Heart right ventricle (tissue), 16 donors: ENCODE measurements at regions of chr17 and their contacts with region 1.

Region 1: GRCh38 chr17:42388381-42389134 is at the start of gene STAT3:
- DNase-seq: peak; percentile 100
- ATAC-seq: peak; percentile 95 to 99 (median 98)
- H3K4me3 ChIP-seq: peak within 1 kb of the TSS; percentile 67 to 100 (median 90)
- H3K27ac ChIP-seq: peak within 1 kb of the TSS; percentile 95 to 100 (median 100)
- H3K4me1 ChIP-seq: peaks cover 0 to 50% (median 35%) of the 10 kb centered on the region in 9 donors
- H3K27me3 ChIP-seq: no peaks in the 10 kb centered on the region
- CTCF ChIP-seq: peak in 3 of 9 donors; percentile 2 to 32 (median 26)
- total RNA-seq, gene STAT3: 87.2 to 398 (median 115) TPM

Region 2: DNA sequence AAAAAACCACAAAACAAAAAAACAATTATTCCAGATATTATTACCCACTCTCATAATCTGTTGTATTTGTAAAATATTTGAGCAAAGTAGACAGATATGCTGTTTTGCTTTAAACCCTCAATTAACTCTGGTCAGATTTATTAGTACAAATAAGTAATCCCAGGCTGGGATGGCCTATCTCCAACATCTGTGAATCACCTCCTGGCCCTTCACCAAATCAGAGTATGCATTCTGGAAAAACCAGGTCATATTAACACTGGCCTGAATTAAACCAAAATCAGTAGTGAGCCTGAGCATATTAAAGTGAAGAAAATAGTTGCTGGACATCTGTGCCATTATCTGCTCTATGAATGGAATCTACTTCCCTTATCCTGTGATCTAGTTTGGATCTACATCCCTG is 41.4 kb before region 1 on chr17:
- intact Hi-C with region 1: loop called in 3 of 10 experiments (anchors 5 kb)
- DNase-seq: peak in 1 of 2 donors; percentile 65
- ATAC-seq: peak in 7 of 8 donors; percentile 25 to 59 (median 50)
- H3K4me3 ChIP-seq: no peak overlapping the region
- H3K27ac ChIP-seq: peak overlapping the region in 6 of 10 donors; percentile 17 to 67 (median 30)
- H3K4me1 ChIP-seq: peaks cover 9 to 57% (median 39%) of the 10 kb centered on the region in 9 donors
- H3K27me3 ChIP-seq: no peaks in the 10 kb centered on the region
- CTCF ChIP-seq: no peak

Region 3: GRCh38 chr17:42365136-42365535 is 23.4 kb before region 1 on chr17:
- intact Hi-C with region 1: no loop called
- DNase-seq: no peak
- ATAC-seq: no peak
- H3K4me3 ChIP-seq: no peak overlapping the region
- H3K27ac ChIP-seq: peak overlapping the region in 1 of 10 donors; percentile 22
- H3K4me1 ChIP-seq: peaks cover 19 to 98% (median 80%) of the 10 kb centered on the region in 9 donors
- H3K27me3 ChIP-seq: no peaks in the 10 kb centered on the region
- CTCF ChIP-seq: no peak